ENCODE measurements at regions of chr14 and their contacts with region 1.

Region 1: GRCh38 chr14:59688224-59689170 is 111.9 kb upstream of the CCDC175 start:
- DNase-seq: peak; percentile 58 to 82 (median 81)
- H3K4me3 ChIP-seq: no peak overlapping the region
- H3K27ac ChIP-seq: no peak overlapping the region
- H3K4me1 ChIP-seq: peaks cover 0 to 3% (median 0%) of the 10 kb centered on the region in 4 experiments
- H3K27me3 ChIP-seq: no peaks in the 10 kb centered on the region

Region 2: DNA sequence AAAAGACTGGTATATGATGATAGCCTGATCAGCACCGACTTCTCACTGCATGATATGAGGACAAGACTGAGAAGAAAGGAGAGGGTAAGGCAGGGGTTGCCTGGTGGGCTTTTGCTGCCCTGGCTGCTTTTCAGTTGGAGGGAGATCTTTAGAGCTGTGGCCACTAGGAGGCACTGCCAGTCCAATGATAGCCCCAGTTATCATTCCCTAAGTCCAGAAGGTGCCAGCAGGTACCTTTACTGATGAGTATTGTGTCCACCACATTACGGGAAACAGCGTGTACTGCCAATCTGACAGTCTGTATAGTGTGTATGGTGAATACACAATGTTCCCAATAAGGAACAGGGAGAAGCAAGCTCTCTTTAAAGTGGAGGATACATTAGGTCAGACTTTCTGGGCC is 56.1 kb before region 1 on chr14:
- CTCF ChIA-PET with region 1: interaction called, 10 read pairs
- POLR2A ChIA-PET with region 1: no interaction called
- DNase-seq: peak; percentile 31 to 59 (median 52)
- H3K4me3 ChIP-seq: no peak overlapping the region
- H3K27ac ChIP-seq: no peak overlapping the region
- H3K4me1 ChIP-seq: peaks cover 0 to 12% (median 10%) of the 10 kb centered on the region in 4 experiments
- H3K27me3 ChIP-seq: peaks cover 10 to 30% (median 23%) of the 10 kb centered on the region in 5 experiments

Region 3: GRCh38 chr14:59698793-59699192 is 10.3 kb after region 1 on chr14:
- CTCF ChIA-PET with region 1: interaction called, 12 read pairs
- POLR2A ChIA-PET with region 1: no interaction called
- DNase-seq: peak in 2 of 3 donors; percentile 23 to 36
- H3K4me3 ChIP-seq: no peak overlapping the region
- H3K27ac ChIP-seq: no peak overlapping the region
- H3K4me1 ChIP-seq: peaks cover 0 to 7% (median 2%) of the 10 kb centered on the region in 4 experiments
- H3K27me3 ChIP-seq: no peaks in the 10 kb centered on the region

Region 4: GRCh38 chr14:59829469-59830337 is 141.2 kb after region 1 on chr14:
- CTCF ChIA-PET with region 1: no interaction called
- POLR2A ChIA-PET with region 1: no interaction called
- DNase-seq: peak in 2 of 3 donors; percentile 46 to 51
- H3K4me3 ChIP-seq: no peak overlapping the region
- H3K27ac ChIP-seq: no peak overlapping the region
- H3K4me1 ChIP-seq: peaks cover 5 to 27% (median 13%) of the 10 kb centered on the region in 4 experiments
- H3K27me3 ChIP-seq: no peaks in the 10 kb centered on the region